Activated CD8-positive, alpha-beta memory T cell treated with anti-CD3 and anti-CD28 coated beads, Interleukin-2, amount 10 ng/mL, durations not matched to agents 7 days and 5 days (primary cell): ENCODE measurements at regions of chr9 and their contacts with region 1.

Region 1: GRCh38 chr9:122125158-122125508 is 32.0 kb upstream of the TTLL11 start:
- DNase-seq: peak; percentile 83
- ATAC-seq: peak; percentile 83
- H3K4me3 Mint-ChIP-seq: no peak overlapping the region
- H3K27ac Mint-ChIP-seq: no peak overlapping the region
- H3K4me1 Mint-ChIP-seq: peaks cover 21% of the 10 kb centered on the region
- H3K27me3 Mint-ChIP-seq: peaks cover 34% of the 10 kb centered on the region

Region 2: DNA sequence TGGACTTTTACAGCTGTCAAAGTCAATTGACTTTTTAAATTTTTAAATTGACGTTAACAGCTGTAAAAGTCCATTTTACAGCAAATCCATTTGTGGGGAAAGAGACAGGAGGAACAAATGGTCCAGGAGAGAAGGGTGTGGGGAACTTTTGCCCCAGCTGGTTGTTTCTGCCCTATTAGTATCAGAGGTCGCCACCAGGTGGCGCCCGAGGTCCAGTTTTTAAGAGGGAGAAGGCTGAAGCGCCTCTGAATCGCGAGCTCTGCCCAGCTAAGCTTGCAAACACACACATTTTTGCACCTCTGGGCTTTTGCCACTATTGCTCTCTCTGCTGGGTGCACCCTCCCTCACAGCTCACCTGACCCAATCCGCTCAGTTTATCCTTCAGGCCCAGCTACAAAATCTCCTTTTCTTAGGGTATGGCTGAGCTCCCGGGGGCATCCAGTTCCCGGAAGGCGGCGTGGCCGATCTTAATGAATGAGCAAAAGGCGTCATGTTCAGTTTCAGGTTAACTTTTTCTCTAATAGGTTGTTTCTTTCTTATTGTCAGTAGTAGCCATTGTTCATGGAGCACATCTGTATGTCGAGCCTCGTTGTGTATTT is 25.8 kb before region 1 on chr9:
- CTCF ChIA-PET with region 1: interaction called, 294 read pairs
- DNase-seq: peak; percentile 83
- ATAC-seq: peak; percentile 78
- H3K4me3 Mint-ChIP-seq: no peak overlapping the region
- H3K27ac Mint-ChIP-seq: no peak overlapping the region
- H3K4me1 Mint-ChIP-seq: peaks cover 11% of the 10 kb centered on the region
- H3K27me3 Mint-ChIP-seq: peaks cover 30% of the 10 kb centered on the region

Region 3: GRCh38 chr9:122144836-122145591 is 19.9 kb after region 1 on chr9:
- CTCF ChIA-PET with region 1: interaction called, 35 read pairs
- DNase-seq: no peak
- ATAC-seq: no peak
- H3K4me3 Mint-ChIP-seq: no peak overlapping the region
- H3K27ac Mint-ChIP-seq: no peak overlapping the region
- H3K4me1 Mint-ChIP-seq: peaks cover 11% of the 10 kb centered on the region
- H3K27me3 Mint-ChIP-seq: no peaks in the 10 kb centered on the region

Region 4: DNA sequence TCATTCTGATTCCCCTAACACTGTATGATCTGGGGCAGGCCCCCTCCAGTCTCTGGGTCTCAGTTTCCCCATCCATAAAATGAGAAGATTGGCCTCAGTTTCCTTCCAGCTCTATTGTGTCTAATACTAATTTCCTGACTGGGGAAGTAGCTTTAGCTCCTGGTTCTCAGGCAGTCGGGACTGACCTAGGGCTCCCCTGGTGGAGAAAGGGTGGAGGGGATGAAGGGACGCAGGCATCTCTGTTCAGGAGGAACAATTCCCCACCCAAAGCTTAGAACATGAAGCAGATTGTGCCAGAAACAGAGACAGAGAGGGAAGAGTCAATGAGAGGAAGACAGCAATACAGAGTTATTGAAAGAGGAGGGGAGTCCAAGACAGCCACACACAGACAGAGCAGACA is 231.5 kb after region 1 on chr9:
- CTCF ChIA-PET with region 1: interaction called, 304 read pairs
- DNase-seq: no peak
- ATAC-seq: no peak
- H3K4me3 Mint-ChIP-seq: no peak overlapping the region
- H3K27ac Mint-ChIP-seq: no peak overlapping the region
- H3K4me1 Mint-ChIP-seq: peaks cover 9% of the 10 kb centered on the region
- H3K27me3 Mint-ChIP-seq: peaks cover 7% of the 10 kb centered on the region

Region 5: DNA sequence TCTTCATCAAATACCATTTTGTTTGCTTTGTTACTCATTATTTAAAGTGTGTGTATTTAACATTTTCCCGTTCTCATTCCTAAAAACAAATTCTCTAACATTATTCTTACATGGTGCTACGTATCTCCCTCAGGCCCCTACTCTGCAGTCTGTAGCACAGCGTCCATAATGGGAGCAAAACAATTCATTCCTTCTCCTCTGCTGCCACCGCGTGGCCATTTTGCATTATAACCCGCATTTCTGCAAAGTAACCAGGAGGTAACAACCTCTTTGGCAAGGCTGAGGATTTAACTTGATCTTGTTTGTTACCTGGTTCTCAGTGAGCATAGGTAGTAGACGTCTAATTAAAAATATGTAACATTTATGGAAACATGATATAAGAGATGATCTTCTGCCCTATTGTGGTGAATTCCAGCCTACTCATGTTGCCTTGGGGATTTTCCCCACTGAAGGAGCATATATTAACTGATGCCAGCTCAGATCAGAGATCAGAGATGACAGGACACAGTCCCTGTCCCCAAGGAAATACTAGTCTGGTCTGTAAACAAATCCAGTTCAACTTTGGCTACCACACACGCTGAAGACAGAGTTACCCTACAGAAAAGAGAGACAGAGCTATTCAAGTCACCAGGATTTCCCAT is 685.3 kb after region 1 on chr9:
- CTCF ChIA-PET with region 1: interaction called, 14 read pairs
- DNase-seq: peak; percentile 83
- ATAC-seq: peak; percentile 67
- H3K4me3 Mint-ChIP-seq: no peak overlapping the region
- H3K27ac Mint-ChIP-seq: no peak overlapping the region
- H3K4me1 Mint-ChIP-seq: peaks cover 30% of the 10 kb centered on the region
- H3K27me3 Mint-ChIP-seq: no peaks in the 10 kb centered on the region